ENCODE measurements at regions of chr21 and their contacts with region 1.

Region 1: DNA sequence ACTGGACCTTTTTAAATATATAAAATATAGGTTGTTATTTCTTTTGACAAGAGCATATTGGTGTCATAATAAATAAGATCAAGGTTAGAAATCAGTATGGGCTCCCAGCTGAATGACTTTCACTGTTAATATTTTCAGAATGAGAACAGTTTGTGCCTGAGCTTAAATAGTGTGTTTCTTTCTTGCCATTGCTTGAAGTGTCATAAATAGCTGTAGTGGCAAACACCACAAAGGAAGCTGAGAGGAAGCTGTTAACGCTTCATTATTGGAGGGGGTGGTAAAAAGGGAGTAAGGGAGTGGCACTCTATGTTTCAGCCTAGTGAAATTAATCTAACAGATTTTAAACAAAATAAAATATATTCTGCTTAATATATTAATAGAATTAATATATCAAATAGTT is 1089.8 kb upstream of the NCAM2 start:
- DNase-seq: no peak
- H3K4me3 ChIP-seq: no peak overlapping the region
- H3K27ac ChIP-seq: no peak overlapping the region
- H3K4me1 ChIP-seq: no peaks in the 10 kb centered on the region
- H3K27me3 ChIP-seq: no peaks in the 10 kb centered on the region
- CTCF ChIP-seq: no peak

Region 2: GRCh38 chr21:18451670-18452069 is 1456.7 kb before region 1 on chr21:
- CTCF ChIA-PET with region 1: interaction called, 10 read pairs
- POLR2A ChIA-PET with region 1: no interaction called
- intact Hi-C with region 1: no loop called
- DNase-seq: no peak
- H3K4me3 ChIP-seq: no peak overlapping the region
- H3K27ac ChIP-seq: no peak overlapping the region
- H3K4me1 ChIP-seq: no peaks in the 10 kb centered on the region
- H3K27me3 ChIP-seq: no peaks in the 10 kb centered on the region
- CTCF ChIP-seq: no peak